Activated T-helper 2 cell treated with anti-CD3 and anti-CD28 coated beads, Interferon-gamma antibody, Interleukin-2, Interleukin-4, amounts not matched to agents 10 μg/mL and 5 μg/mL and 100 μg/mL, durations not matched to agents 14 hours and 24 hours and 36 hours (primary cell): ENCODE measurements at regions of chr3 and their contacts with region 1.

Region 1: DNA sequence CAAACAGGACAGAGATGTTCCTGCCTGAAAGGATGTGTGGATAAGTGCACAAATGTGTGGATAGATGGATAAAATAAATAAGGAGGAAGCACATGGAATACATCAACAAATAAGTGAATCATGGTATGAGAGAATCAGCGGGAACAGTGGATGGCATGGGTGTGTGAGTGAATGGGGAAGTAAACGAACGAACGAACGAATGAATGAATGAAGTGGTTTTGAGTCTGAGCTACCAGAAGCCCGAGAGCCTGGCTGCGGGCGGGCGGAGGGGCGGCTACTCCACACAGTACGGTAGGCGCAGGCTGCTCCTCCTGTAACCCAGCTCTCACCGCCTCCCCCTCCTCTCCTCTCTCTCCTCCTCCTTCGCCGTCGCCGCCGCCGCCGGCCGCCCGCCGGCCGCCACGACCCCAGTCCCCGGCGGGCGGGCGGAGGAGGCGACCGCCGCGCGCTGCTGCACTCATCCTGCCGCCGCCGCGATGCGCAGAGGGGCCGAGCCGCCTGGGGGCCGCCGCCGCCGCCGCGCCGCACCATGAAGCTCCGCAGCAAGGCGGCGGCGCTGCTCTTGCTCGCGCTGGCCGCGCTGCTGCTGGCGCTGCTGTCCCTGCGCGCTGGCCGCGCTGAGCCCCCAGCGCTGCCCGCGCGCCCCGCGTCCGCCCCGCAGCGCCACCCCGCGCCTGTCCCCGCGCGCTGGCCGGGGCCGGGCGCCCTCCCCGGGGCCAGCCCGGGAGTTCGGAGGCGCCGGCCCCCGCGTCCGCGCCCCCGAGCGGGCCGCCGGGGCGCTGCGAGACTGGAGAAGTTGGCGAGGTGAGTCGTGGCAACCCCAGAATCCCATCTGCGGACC is at the start of gene GXYLT2:
- DNase-seq: peak; percentile 14
- H3K4me3 Mint-ChIP-seq: peak within 1 kb of the TSS; percentile 80
- H3K27ac Mint-ChIP-seq: no peak within 1 kb of the TSS
- H3K4me1 Mint-ChIP-seq: peaks cover 8% of the 10 kb centered on the region
- H3K27me3 Mint-ChIP-seq: peaks cover 82% of the 10 kb centered on the region
- total RNA-seq, gene GXYLT2: 0.05 TPM in 1 of 2 replicates, not detected in the other

Region 2: DNA sequence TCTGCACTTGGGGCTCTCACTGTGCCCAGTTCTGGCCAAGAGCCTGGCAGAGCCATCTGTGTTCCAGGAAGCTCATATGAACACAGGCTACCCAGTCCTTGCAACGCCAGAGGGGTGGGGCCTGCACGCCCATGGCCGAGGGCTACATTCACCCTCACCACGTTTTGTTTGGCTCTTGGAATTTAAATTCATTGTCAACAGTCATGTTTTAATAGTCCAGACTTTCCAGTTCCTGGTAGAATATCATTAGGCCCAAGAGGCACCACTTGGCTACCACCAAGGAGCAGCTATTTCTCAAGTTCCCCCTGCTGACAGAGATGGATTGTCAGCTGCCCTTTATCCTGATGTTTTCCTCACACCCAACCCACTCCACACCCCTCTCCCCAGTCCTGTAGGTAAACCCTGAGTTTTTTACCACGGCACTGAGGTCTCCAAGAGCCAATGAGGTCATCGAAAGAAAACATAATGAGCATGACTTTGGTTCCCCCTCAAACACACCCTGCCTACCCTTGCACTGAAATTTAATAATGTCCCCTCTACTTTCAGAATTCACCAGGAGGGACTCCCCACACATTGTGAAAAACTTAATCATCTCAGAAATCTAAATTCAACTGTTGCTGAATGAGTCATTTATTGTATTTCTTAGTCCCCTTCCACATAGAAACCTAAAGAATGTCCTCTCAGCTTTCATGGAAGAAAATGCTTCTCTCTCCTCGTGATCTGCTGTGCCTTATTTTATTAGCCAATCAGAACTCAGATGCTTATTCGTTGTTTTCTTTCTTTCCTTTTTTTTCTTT is 164.8 kb before region 1 on chr3:
- intact Hi-C with region 1: no loop called
- DNase-seq: no peak
- H3K4me3 Mint-ChIP-seq: no peak overlapping the region
- H3K27ac Mint-ChIP-seq: peak overlapping the region; percentile 54
- H3K4me1 Mint-ChIP-seq: peaks cover 19% of the 10 kb centered on the region
- H3K27me3 Mint-ChIP-seq: peaks cover 3% of the 10 kb centered on the region

Region 3: DNA sequence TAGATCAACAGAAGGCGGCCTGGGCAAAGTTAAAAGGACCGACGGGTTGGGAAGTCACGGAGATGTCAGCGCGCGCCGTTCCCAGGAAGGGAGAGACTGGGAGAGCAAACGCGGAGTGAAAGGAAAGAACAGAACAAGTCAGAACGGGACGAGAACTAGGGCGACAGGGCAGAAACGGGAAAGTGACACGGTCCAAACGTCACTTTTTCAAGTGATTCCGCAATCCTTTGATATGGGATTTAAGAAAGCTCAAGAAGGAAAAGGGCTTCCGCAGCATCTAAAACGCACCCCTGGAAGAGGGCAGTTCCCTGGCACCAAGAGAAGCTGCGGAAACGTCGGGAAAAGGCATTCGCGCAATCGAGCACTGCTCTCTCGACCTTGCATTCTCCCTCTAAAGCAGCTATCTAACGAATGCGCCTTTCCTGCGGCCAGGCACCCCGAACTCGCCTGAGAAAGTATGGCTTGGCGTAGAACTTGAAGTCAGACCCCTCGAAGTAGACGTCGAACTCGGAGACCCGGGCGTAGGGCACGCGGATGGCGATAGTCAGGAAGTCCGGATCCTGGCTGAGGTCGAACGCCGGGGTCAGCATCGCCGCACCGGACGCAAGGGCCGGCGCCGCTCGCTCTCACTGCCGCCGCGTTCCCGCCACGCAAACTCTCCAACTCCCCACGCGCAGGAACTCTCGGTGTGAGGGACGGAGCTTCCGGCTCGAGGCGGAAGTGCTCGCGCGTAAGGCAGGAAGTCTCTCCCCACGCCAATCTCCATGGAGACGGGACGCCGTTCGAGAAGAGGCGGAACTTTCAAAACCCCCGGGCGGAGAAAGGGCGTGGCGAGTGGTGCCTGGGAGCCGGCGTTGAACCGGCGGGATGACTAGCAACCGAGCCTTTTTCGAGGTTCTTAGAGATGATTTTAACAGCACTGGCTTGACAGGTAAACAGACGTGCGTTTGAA is 39.9 kb before region 1 on chr3 and contains the start of gene SHQ1:
- intact Hi-C with region 1: loop called (anchors 5 kb)
- DNase-seq: peak; percentile 91
- H3K4me3 Mint-ChIP-seq: peak within 1 kb of the TSS; percentile 99
- H3K27ac Mint-ChIP-seq: peak within 1 kb of the TSS; percentile 77
- H3K4me1 Mint-ChIP-seq: peaks cover 54% of the 10 kb centered on the region
- H3K27me3 Mint-ChIP-seq: no peaks in the 10 kb centered on the region
- total RNA-seq, gene SHQ1: 29.0 and 31.2 TPM in 2 replicates

Region 4: DNA sequence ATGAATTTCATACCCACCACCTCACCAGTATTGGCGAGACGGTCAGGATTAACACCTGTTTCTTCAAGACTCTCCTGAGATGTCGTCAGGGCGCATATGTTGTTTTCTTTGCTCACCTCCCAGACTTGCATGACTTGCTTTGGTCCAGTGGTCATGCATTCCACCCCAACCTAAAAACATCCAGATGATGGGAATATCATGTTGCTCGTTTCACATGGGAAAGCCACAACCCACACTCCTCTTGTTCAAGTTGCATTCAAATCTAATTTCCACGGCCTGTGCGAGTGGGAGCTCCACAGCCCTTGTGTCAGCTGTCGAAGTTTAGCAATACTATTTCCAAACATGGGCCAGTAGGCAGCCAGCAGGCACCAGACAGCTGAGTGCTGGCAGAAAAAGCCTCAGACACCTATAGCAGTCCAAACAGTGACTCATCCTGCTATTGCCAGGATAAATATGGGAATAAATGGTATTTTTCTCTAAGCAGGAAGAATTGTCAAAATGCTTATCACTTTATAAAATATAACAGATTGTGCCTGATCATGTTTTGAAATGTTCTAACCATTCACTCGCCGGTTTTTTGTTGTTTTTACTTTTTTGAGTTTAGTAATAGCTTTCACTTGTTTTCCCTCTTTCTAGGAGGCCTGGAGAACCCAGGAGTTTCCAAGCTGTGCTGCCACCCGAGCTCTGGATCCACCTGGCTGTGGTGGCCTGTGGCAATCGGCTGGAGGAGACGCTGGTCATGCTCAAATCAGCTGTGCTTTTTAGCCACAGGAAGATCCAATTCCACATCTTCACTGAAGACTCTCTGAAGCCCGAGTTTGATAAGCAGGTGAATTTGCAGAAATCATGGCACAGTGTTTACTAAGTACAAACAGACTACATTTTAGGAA is 20.1 kb after region 1 on chr3:
- intact Hi-C with region 1: no loop called
- DNase-seq: no peak
- H3K4me3 Mint-ChIP-seq: no peak overlapping the region
- H3K27ac Mint-ChIP-seq: no peak overlapping the region
- H3K4me1 Mint-ChIP-seq: no peaks in the 10 kb centered on the region
- H3K27me3 Mint-ChIP-seq: peaks cover 7% of the 10 kb centered on the region

Region 5: DNA sequence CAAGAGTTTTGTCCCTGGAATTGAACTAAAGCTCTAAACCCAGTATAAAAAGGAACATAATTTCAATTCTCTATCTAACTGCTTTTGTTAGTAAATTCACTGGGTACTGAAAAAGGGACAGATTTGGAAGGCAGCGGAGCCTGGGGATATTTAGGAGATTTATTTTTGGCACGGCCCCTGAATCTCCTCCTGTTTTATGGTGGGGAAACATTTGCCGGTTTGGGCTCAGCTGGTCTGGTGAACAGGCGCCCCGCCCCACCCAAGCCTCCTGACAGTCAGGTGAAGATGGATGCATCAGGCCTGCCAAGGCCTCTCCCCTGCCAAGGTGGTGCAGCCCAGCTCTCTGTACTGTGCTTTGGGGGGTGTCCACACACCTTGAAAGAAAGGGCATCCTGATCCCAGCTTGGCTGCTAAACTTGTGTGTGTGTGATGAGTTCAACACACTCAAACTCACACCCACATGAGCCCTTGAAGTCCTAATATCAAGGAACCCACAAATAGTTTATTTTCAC is 219.8 kb after region 1 on chr3:
- intact Hi-C with region 1: no loop called
- DNase-seq: no peak
- H3K4me3 Mint-ChIP-seq: no peak overlapping the region
- H3K27ac Mint-ChIP-seq: no peak overlapping the region
- H3K4me1 Mint-ChIP-seq: no peaks in the 10 kb centered on the region
- H3K27me3 Mint-ChIP-seq: no peaks in the 10 kb centered on the region